ENCODE measurements at regions of chr6 and their contacts with region 1.

Region 1: GRCh38 chr6:107674995-107675738 is 148.9 kb downstream of the SCML4 start:
- DNase-seq: peak; percentile 90
- H3K4me3 Mint-ChIP-seq: peak overlapping the region; percentile 74
- H3K27ac Mint-ChIP-seq: peak overlapping the region; percentile 95
- H3K4me1 Mint-ChIP-seq: peaks cover 8% of the 10 kb centered on the region
- H3K27me3 Mint-ChIP-seq: peaks cover 19% of the 10 kb centered on the region
- CTCF ChIP-seq: peak; percentile 78

Region 2: DNA sequence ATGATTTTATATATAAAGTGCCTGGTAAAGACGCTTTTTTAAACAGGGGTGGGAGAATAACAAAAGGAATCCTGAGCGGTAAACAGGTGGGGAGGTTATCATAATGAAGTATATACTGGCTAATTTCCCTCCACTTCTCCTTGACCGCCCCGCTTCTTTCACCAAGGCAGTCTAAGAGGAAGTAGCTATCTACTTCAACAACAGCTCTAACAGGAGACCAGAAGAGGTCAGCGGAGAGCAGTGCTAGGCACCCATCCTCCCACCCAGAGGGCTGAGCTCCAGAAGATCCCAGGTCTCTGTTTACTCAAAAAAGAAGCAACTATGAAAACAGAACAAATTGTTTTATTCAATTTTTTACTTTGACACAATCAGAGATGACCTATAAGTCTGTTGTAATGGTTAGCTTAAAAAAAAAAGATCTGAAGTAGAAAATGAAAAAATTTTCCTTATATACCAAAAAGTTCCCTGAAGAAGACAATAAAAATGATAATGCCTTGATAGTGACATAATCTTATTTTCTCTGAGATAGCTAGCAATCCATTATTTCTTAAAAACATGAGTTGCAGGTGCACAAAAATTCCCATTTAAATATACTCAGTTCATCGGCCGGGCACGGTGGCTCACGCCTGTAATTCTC is 356.9 kb before region 1 on chr6:
- CTCF ChIA-PET with region 1: no interaction called
- intact Hi-C with region 1: loop called (anchors 1 kb)
- DNase-seq: peak; percentile 60
- H3K4me3 Mint-ChIP-seq: no peak overlapping the region
- H3K27ac Mint-ChIP-seq: no peak overlapping the region
- H3K4me1 Mint-ChIP-seq: no peaks in the 10 kb centered on the region
- H3K27me3 Mint-ChIP-seq: no peaks in the 10 kb centered on the region
- CTCF ChIP-seq: peak; percentile 47

Region 3: GRCh38 chr6:107634324-107635056 is 40.7 kb before region 1 on chr6:
- CTCF ChIA-PET with region 1: no interaction called
- intact Hi-C with region 1: no loop called
- DNase-seq: no peak
- H3K4me3 Mint-ChIP-seq: no peak overlapping the region
- H3K27ac Mint-ChIP-seq: no peak overlapping the region
- H3K4me1 Mint-ChIP-seq: no peaks in the 10 kb centered on the region
- H3K27me3 Mint-ChIP-seq: no peaks in the 10 kb centered on the region
- CTCF ChIP-seq: no peak

Region 4: GRCh38 chr6:107847844-107848802 is 173.0 kb after region 1 on chr6:
- CTCF ChIA-PET with region 1: no interaction called
- intact Hi-C with region 1: loop called (anchors 1 kb)
- DNase-seq: peak; percentile 94
- H3K4me3 Mint-ChIP-seq: peak overlapping the region; percentile 70
- H3K27ac Mint-ChIP-seq: no peak overlapping the region
- H3K4me1 Mint-ChIP-seq: peaks cover 8% of the 10 kb centered on the region
- H3K27me3 Mint-ChIP-seq: no peaks in the 10 kb centered on the region
- CTCF ChIP-seq: peak; percentile 91

Region 5: DNA sequence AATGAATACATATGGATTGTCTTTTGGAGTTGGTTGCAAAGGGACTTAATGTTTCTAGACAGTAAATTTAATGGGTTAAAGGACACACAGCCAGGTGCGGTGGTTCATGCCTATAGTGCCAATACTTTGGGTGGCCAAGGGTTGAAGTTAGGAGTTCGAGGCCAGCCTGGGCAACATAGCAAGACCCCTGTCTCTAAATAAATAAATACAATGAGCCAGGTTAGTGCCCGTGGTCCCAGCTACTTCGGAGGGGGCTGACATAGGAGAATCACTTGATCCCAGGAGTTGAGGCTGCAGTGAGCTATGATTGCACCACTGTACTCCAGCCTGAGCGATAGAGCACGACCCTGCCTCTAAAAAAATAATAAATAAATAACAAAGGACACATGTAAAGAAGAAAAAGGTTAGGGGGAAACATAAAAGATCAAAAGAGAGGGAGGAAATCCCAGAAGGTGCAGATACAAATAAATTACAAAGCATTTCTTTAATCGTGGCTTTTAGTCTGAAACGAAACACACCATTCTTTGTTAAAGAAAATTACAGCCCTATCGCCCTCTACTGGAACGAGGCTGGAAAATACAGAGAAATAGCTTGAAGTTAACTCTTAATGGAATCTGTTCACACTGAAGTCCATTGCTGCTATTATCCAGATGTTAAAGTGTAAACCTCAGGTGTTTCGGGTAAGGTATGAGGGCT is 191.6 kb after region 1 on chr6:
- CTCF ChIA-PET with region 1: interaction called, 6 read pairs
- intact Hi-C with region 1: loop called (anchors 5 kb)
- DNase-seq: peak; percentile 40
- H3K4me3 Mint-ChIP-seq: no peak overlapping the region
- H3K27ac Mint-ChIP-seq: no peak overlapping the region
- H3K4me1 Mint-ChIP-seq: no peaks in the 10 kb centered on the region
- H3K27me3 Mint-ChIP-seq: no peaks in the 10 kb centered on the region
- CTCF ChIP-seq: peak; percentile 39